Right ventricle myocardium inferior (tissue), 1 donor: ENCODE measurements at regions of chr3 and their contacts with region 1.

Region 1: DNA sequence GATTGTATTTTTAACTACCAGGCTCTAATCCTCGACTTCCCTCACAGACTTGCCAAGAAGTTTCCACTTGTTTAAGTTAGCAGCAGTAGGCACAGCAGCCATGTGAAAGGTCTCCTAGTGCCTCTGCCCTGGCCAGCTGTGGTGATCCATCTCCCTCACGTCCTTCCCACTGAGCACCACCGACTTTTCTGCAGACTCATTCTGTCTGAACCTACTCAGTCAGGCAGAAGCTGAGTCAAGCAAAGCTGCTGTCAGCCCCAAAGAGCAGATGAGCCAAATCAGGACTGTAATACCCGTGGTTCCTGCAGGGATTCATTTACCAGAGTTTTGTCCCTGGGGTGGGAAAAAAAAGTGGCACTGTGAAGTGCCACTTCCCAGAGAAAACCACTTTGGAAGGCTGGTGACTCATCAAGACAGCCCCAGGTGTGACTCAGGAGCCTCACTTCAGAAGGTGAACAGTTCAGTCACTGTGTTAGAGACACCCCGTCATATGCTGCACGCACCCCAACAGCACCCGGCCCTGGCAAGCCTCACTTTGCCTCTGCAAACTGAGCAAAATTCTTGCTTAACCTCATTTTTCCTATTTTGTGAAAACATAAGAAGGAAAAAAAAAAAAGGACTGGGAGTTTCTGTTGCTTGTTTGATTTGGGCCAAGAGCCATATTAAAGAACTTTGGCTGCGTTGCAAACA is 76.0 kb downstream of the WWTR1 start:
- DNase-seq: no peak
- ATAC-seq: peak; percentile 67

Region 2: GRCh38 chr3:149414557-149415231 is 167.1 kb before region 1 on chr3:
- intact Hi-C with region 1: no loop called
- DNase-seq: no peak
- ATAC-seq: no peak

Region 3: DNA sequence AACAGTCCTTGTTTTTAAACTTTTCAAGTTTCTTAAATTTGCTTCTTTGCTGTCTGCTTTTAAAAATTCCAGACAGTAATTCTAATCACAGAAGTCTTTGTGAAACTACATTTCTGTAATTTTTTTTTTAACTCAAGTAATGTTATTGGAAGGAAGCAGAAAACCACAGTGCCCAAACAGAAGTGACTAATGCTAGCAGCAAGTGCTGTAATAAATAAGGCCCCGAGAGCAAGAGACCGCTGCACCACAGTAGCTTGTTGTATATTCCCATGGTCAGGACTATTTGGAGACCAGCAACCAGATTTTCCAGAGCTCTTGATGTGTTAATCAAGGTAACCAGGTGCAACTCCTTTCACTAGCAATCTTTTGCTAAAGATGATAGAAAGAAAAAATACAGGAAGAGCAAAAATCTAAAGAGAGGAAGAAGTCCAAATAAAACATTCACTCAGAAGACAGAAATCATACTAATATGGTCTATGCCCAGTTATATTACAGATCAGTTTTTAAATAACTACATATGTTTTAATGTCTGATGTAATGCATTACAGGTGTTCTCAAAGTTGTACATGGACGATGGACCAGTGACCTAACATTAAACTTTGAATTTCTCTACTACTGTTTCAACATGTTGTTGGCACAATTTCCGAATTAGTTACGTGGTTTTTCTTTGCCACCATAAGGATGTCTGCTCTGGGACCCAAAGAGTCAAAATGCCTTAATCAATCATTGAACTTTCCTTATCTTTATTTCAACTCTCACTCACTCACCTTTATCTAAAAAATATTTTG is 39.6 kb after region 1 on chr3:
- intact Hi-C with region 1: loop called (anchors 5 kb)
- DNase-seq: no peak
- ATAC-seq: no peak

Region 4: DNA sequence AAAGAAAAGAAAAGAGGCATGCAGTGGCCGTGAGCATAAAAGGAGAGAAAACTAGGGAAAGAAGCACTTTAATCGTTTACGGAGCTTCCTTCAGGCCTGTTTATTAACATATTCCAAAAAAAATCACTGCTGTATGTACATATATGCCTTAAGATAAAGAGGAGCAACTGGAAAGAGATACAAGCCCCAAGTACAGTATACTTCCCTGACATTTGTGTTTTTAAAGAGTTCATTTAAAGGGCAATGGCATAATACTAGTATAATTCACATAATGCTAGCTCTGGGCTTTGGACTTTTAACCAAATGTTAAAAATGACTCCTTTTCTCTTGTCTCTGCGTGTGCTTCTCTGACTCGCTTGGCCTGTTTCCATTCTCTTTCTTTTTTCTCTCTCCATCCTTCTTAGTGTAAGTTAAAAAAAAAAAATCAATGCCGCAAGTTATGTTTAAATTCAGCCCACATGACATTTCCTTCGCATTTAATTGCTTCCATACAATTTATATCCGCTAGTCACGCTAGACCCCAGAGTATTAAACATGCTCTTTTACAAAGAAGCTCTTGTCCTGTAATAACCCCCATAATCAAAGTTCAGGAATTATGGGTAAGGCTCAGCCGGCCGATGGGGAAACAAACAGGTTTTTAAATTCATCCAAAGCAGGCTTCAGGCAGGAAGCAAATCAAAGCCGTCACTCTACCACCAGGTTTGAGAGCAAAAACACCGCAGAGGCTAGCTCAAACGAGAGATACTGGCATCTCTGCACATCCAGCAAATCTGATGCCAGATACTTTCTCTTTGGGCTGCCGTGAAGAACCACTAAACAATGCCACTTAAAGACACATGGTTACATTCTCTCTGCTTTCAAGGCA is 56.6 kb after region 1 on chr3:
- intact Hi-C with region 1: loop called (anchors 5 kb)
- DNase-seq: no peak
- ATAC-seq: peak; percentile 24